GM10248 (cell line): ENCODE measurements at regions of chr4 and their contacts with region 1.

Region 1: GRCh38 chr4:163505374-163505773 is 10.9 kb downstream of the TMA16 start:
- DNase-seq: no peak
- CTCF ChIP-seq: no peak

Region 2: GRCh38 chr4:162645381-162645780 is 860.0 kb before region 1 on chr4:
- CTCF ChIA-PET with region 1: no interaction called
- POLR2A ChIA-PET with region 1: no interaction called
- DNase-seq: no peak
- CTCF ChIP-seq: no peak

Region 3: GRCh38 chr4:163484906-163485305 is 20.5 kb before region 1 on chr4:
- CTCF ChIA-PET with region 1: interaction called, 13 read pairs
- POLR2A ChIA-PET with region 1: no interaction called
- DNase-seq: peak; percentile 36
- CTCF ChIP-seq: peak; percentile 55